HepG2 (cell line): ENCODE measurements at regions of chr1 and their contacts with region 1.

Region 1: DNA sequence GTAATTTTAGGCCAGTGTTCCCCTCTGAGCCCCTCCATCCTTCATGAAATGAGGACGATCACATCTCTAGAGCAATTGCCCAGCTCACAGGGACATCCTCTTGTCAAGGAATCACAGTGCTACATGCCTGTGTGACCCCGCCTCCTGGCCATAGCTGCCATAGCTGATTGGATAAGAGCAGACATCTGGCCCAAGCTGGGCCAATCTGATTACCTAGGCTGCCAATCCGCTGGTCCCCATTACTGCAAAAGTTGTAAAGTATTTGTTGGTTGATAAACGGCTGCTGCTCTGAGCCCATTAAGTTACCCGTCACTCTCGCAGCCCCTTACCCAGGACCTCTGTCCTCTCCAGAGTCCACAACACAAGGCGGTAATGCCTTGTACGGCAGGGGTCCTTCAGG is 8.3 kb downstream of the NT5C1A start:
- DNase-seq: no peak
- ATAC-seq: peak; percentile 42; the same call in 2 of the 3 replicates
- H3K4me3 ChIP-seq: no peak overlapping the region
- H3K27ac ChIP-seq: no peak overlapping the region
- H3K4me1 ChIP-seq: no peaks in the 10 kb centered on the region
- H3K27me3 ChIP-seq: peaks cover 0 to 54% of the 10 kb centered on the region in 2 experiments; a peak in 3 of 5 replicates
- CTCF ChIP-seq: no peak
- EP300 ChIP-seq: no peak
- POLR2A ChIP-seq: no peak
- RAD21 ChIP-seq: no peak

Region 2: DNA sequence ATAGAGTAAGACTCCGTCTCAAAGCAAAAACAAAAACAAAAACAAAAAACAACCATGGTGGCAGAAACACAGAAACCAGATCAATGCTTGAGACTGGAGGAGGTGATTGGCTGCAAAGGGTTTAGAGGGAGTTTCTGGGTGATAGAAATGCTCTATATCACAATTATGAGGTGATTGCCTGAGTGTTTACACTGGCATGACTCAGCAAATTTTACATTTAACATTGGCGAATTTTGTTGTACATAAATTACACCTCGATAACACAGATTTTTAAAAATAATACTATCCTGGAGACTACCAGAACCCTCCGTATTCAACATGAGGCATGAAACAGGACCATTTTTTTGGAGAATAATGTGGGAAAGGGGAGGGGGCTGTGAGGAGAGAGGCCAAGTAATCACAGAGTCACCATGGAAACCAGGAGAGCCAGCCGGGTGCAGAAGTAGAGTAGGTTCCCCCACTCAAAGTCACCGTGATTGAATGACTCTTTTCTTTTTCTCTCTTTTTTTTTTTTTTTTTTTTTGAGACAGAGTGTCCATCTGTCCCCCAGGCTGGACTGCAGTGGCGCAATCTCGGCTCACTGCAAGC is 48.4 kb before region 1 on chr1:
- CTCF ChIA-PET with region 1: no interaction called
- POLR2A ChIA-PET with region 1: no interaction called
- in situ Hi-C with region 1: no loop called
- intact Hi-C with region 1: loop called (anchors 2 kb)
- DNase-seq: no peak
- ATAC-seq: no peak
- H3K4me3 ChIP-seq: no peak overlapping the region
- H3K27ac ChIP-seq: no peak overlapping the region
- H3K4me1 ChIP-seq: peaks cover 7% of the 10 kb centered on the region; the same call in 1 of the 2 replicates
- H3K27me3 ChIP-seq: peaks cover 2 to 5% of the 10 kb centered on the region in 2 experiments; a peak in 2 of 5 replicates
- CTCF ChIP-seq: no peak
- EP300 ChIP-seq: no peak
- POLR2A ChIP-seq: no peak
- RAD21 ChIP-seq: no peak

Region 3: DNA sequence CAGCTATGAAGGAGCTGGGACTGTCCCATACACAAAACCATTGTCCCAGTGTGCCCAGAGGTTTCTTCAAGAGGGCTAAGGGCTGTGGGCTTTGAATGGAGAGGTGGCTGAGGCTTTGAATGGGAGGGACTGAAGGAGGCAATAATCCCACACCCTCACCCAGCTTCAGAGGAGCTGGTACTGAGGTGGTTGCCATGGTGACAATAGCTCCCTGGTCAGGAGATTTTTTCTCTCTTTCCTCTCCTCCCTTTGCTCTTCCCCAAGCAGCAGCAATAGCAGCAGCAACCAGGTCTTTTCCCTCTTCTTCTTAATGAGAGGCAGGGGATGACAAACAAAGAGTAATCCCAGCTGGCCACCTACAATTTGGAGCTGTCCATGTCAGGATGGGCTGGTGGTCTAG is 26.1 kb after region 1 on chr1:
- CTCF ChIA-PET with region 1: no interaction called
- POLR2A ChIA-PET with region 1: no interaction called
- in situ Hi-C with region 1: no loop called
- intact Hi-C with region 1: loop called (anchors 1 kb)
- DNase-seq: no peak
- ATAC-seq: no peak
- H3K4me3 ChIP-seq: no peak overlapping the region
- H3K27ac ChIP-seq: no peak overlapping the region
- H3K4me1 ChIP-seq: peaks cover 11% of the 10 kb centered on the region; the same call in 1 of the 2 replicates
- H3K27me3 ChIP-seq: peaks cover 11 to 55% of the 10 kb centered on the region in 2 experiments
- CTCF ChIP-seq: no peak
- EP300 ChIP-seq: no peak
- POLR2A ChIP-seq: no peak
- RAD21 ChIP-seq: no peak